T-cell (primary cell): ENCODE measurements at regions of chr6 and their contacts with region 1.

Region 1: DNA sequence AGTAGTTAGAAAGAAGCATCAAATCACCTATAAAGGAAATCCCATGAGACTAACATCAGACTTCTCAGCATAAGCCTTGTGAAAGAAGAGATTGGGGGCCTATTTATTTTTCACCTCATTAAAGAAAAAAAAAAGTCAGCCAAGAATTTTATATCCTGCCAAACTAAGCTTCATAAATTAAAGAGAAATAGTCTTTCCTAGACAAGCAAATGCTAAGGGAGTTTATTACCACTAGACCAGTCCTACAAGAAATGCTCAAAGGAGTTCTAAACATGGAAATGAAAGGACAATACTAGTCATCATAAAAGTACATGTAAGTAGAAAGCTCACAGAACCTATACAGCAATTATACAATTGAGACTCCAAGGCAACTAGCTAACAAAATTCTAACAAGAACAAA is 96.5 kb upstream of the OLIG3 start:
- DNase-seq: no peak
- ATAC-seq: no peak
- H3K4me3 ChIP-seq: no peak overlapping the region
- H3K4me3 Mint-ChIP-seq: no peak overlapping the region
- H3K27ac ChIP-seq: no peak overlapping the region
- H3K27ac Mint-ChIP-seq: no peak overlapping the region
- H3K4me1 ChIP-seq: peaks cover 0 to 15% of the 10 kb centered on the region in 2 experiments
- H3K4me1 Mint-ChIP-seq: peaks cover 14 to 20% (median 17%) of the 10 kb centered on the region in 3 donors
- H3K27me3 ChIP-seq: peaks cover 0 to 9% of the 10 kb centered on the region in 2 experiments
- H3K27me3 Mint-ChIP-seq: peaks cover 9 to 12% of the 10 kb centered on the region in 2 donors

Region 2: DNA sequence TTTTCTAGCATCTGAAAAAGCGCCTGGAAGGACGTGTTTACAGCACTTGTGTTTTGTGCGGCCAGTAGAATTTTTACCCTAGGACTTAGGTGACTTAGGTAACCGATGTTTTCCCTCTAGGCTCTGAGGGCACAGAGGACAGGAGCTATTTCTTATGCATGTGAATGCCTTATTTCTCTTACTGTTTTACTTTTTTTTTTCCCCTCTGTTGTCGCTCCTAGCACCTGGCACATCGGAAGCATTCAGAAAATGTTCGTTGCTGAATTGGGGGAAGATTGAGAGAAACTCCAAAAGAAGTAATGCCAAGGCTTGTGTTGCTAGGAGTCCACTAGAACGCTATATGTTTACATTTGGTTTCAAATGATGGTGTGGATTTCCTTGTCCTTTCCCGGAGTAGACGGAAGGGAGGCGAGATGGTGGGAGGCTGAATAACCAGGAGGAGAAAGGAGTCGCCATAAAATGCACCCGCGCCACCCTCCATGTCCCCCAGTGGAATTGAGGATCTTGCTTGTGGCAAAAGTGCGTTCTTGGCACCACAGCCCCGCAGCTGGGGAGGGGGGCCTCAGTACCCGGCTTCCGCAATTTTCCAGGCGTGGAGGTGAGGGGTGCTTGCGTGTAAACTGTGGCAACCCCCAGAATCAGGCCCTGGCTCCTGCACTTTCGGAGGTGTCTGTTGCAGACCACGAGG is 103.4 kb before region 1 on chr6:
- CTCF ChIA-PET with region 1: no interaction called
- POLR2A ChIA-PET with region 1: interaction called in 1 of 2 experiments, 11 read pairs
- DNase-seq: no peak
- ATAC-seq: no peak
- H3K4me3 ChIP-seq: peak overlapping the region in 1 of 2 donors; percentile 5
- H3K4me3 Mint-ChIP-seq: peak overlapping the region in 1 of 3 donors; percentile 70
- H3K27ac ChIP-seq: no peak overlapping the region
- H3K27ac Mint-ChIP-seq: no peak overlapping the region
- H3K4me1 ChIP-seq: peaks cover 11 to 27% of the 10 kb centered on the region in 2 experiments
- H3K4me1 Mint-ChIP-seq: peaks cover 22 to 30% (median 30%) of the 10 kb centered on the region in 3 donors
- H3K27me3 ChIP-seq: peaks cover 46% of the 10 kb centered on the region in 2 experiments
- H3K27me3 Mint-ChIP-seq: peaks cover 68 to 77% of the 10 kb centered on the region in 2 donors

Region 3: DNA sequence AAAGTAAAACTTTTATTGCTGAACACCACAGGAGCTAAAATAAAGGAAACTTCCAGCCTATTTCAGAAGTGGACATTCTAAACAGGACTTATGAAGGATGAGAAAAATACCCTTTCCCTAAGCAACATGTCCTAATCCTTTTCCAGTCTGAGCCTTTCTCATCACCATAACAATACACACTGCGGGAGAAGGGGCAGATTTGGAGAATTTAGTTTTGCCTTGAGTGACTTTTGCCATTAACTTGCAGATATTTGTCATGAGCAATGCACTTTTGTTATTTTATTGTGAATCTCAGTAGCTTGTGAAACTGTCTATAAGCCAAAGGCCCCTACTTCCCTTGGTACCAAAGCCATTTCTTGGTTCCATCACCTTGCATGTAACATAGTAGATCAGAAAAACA is 43.5 kb before region 1 on chr6:
- CTCF ChIA-PET with region 1: interaction called in 1 of 2 experiments, 3 read pairs
- POLR2A ChIA-PET with region 1: interaction called in 1 of 2 experiments, 14 read pairs
- DNase-seq: no peak
- ATAC-seq: no peak
- H3K4me3 ChIP-seq: no peak overlapping the region
- H3K4me3 Mint-ChIP-seq: no peak overlapping the region
- H3K27ac ChIP-seq: no peak overlapping the region
- H3K27ac Mint-ChIP-seq: no peak overlapping the region
- H3K4me1 ChIP-seq: no peaks in the 10 kb centered on the region
- H3K4me1 Mint-ChIP-seq: peaks cover 10 to 17% (median 11%) of the 10 kb centered on the region in 3 donors
- H3K27me3 ChIP-seq: no peaks in the 10 kb centered on the region
- H3K27me3 Mint-ChIP-seq: peaks cover 0 to 3% of the 10 kb centered on the region in 2 donors

Region 4: DNA sequence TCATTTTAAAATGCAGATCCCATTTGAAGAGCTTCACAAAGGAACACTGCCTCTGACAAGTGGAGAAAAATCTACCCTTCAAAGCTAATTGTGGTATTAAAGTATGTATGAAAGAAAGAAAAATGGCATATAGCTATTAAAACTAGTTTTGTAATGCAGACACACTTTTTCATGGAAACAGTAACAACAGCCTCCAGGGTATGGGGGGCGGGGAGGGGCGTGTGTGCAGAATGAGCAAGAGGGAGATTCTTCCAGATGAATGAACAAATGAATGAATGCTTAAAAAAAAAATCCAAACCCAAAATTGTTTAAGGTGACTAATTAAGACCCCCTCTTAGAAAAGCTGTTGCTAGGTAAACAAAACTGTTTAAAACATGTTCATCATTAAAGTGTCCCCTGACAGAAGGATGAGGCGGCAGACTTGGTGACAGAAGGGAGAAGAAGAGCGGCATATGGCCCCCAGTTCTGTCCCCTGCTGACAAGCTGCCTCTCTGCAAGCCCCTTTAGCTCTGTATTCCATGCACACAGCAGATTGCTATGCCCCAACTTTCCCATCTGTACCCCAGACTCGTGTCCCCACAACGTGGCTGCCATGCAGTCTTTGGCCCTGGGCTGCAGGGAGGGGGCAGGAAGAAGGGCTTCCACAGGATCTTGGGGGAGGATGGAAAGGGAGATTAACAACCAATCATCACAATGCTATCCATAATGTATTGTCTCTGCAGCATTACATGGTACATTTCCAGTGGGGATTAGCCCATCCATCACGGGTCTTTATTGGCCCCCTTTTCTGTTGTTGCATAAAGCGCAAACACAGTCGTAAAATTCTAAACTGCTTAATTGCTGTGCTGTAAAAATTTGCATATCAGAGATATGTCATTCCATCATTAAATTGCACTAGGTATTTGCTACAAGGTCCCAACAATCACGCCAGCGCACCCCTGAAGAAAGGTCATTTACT is 11.9 kb after region 1 on chr6:
- CTCF ChIA-PET with region 1: interaction called in 1 of 2 experiments, 10 read pairs
- POLR2A ChIA-PET with region 1: no interaction called
- DNase-seq: no peak
- ATAC-seq: no peak
- H3K4me3 ChIP-seq: no peak overlapping the region
- H3K4me3 Mint-ChIP-seq: no peak overlapping the region
- H3K27ac ChIP-seq: no peak overlapping the region
- H3K27ac Mint-ChIP-seq: no peak overlapping the region
- H3K4me1 ChIP-seq: no peaks in the 10 kb centered on the region
- H3K4me1 Mint-ChIP-seq: peaks cover 0 to 8% (median 0%) of the 10 kb centered on the region in 3 donors
- H3K27me3 ChIP-seq: peaks cover 0 to 19% of the 10 kb centered on the region in 2 experiments
- H3K27me3 Mint-ChIP-seq: peaks cover 30 to 34% of the 10 kb centered on the region in 2 donors

Region 5: DNA sequence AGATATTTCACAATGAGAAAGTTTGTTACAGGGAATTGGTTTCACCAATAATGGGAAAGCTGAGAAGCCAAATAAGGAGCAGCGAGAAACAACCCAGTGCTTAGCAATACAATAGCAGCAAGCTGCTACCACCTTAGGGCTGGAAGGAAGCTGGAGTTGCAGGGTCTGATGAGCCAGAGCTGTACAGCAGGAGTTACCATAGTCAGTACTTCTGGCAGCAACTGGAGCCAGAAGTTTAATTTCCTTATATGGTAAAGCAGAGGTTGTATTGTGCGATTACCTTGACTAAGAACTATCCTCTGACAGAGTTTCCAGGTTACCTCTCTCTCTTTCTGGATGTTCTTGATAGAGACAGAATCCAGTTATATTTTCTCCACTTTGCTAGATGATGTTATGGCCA is 40.6 kb after region 1 on chr6:
- CTCF ChIA-PET with region 1: no interaction called
- POLR2A ChIA-PET with region 1: no interaction called
- DNase-seq: no peak
- ATAC-seq: no peak
- H3K4me3 ChIP-seq: no peak overlapping the region
- H3K4me3 Mint-ChIP-seq: no peak overlapping the region
- H3K27ac ChIP-seq: no peak overlapping the region
- H3K27ac Mint-ChIP-seq: no peak overlapping the region
- H3K4me1 ChIP-seq: no peaks in the 10 kb centered on the region
- H3K4me1 Mint-ChIP-seq: peaks cover 0 to 2% (median 0%) of the 10 kb centered on the region in 3 donors
- H3K27me3 ChIP-seq: peaks cover 0 to 3% of the 10 kb centered on the region in 2 experiments
- H3K27me3 Mint-ChIP-seq: peaks cover 0 to 6% of the 10 kb centered on the region in 2 donors